ENCODE measurements at regions of chr16 and their contacts with region 1.

Region 1: DNA sequence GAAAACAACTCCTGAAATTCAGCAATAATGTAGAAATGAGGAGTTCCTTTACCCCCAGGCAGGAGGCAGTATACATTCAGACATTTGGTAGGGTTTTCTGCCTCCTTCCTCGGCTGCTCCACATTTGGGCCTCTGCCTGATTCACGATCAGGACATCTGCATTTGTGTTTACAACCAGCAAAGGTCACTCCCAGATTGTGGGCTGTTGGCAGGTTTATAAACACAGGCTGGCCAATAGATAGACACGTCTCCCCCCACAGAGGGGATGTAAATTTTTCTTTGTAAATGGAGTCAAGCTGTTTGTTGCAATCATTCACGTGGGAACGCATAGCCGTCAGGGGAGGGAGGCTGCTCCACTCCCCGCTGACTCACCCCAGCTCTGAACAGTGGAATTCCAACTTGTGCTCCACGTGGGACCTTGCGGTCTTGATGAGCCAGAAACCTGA is 252.1 kb upstream of the N4BP1 start:
- DNase-seq: no peak

Region 2: GRCh38 chr16:48561960-48562393 is 300.1 kb before region 1 on chr16:
- in situ Hi-C with region 1: no loop called
- DNase-seq: no peak

Region 3: GRCh38 chr16:48745541-48745940 is 116.6 kb before region 1 on chr16:
- in situ Hi-C with region 1: loop called (anchors 25 kb)
- DNase-seq: no peak

Region 4: DNA sequence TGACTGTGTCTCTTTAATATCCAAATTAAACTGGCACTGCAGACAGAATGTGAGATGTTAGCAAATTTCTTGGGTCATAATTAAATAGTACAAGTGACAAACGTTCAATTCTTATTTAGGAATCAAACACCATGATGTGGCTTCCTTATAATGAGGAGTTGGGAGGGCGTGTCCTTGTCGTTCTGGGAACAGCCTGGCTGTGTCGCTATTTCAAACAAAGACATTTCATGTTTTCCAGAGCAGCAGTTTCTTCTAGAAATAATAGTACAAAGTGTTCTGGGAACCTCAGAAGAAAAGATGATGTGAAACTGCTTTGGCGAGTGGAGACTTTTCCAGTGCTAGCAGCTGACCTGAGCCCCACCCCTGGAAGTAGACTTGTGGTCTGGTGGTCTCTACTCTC is 49.6 kb after region 1 on chr16:
- in situ Hi-C with region 1: no loop called
- DNase-seq: no peak

Region 5: DNA sequence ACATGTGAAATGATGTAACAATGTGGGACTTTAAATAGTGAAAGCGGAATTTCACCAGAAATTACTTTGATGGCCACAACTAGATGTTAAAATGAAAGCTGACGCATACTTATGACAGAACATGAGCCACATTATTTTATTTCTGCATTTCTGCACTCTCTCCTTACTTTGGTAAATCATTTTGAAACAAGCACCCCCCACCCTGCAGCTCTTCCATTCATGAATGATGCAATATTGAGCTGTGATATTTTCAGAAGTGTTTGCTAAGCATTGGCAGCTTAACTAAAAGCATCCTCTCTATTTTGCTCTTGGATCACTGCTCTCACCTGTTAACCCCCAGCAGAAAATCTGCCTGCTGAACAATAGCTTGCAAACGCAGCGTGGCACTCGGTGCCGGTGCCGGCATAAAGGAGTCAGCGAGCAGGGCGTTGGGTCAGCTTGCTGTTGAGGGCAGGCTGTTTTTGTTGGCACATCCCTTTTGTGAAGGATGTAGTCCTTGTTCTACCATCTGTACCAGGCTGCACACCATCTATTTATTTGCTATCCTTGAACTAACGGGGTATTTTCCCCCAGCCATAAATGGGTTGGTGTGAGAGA is 450.4 kb after region 1 on chr16:
- in situ Hi-C with region 1: no loop called
- DNase-seq: no peak

Region 6: DNA sequence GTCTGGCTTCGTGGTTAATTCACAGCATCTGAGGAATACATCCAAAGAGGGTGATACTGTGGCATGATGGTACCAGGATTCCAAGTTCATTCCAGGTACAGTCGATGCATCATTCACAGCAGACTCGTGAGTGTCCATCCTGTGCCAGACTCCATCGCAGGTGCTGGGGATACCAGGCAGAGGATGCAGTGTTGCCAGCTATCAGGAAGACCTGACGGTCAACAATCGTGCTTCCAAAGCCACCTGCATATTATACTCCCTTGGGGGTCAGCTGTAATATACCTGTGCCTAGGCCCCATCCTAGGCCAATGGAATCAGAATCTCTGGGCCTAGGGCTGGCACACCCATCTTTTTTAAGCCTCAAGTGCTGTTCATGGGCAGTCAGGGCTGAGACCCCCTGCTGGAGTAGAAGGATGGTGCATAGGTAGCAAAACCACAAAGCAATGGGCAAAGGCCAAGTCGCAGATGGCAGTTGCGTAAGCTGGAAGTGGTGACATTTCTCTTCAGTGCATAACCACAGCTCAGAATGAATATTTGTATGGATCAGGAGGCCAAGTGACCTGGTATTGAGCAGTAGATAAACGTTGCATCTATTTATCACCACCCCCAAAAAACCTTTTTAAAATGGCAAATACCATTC is 468.6 kb after region 1 on chr16:
- in situ Hi-C with region 1: no loop called
- DNase-seq: no peak